AG04450 (cell line): ENCODE measurements at regions of chr6 and their contacts with region 1.

Region 1: GRCh38 chr6:36765594-36766398 is 68.2 kb downstream of the RAB44 start:
- DNase-seq: peak; percentile 43
- H3K4me3 ChIP-seq: no peak overlapping the region
- H3K27ac ChIP-seq: no peak overlapping the region
- H3K27me3 ChIP-seq: no peaks in the 10 kb centered on the region
- CTCF ChIP-seq: peak; percentile 98

Region 2: DNA sequence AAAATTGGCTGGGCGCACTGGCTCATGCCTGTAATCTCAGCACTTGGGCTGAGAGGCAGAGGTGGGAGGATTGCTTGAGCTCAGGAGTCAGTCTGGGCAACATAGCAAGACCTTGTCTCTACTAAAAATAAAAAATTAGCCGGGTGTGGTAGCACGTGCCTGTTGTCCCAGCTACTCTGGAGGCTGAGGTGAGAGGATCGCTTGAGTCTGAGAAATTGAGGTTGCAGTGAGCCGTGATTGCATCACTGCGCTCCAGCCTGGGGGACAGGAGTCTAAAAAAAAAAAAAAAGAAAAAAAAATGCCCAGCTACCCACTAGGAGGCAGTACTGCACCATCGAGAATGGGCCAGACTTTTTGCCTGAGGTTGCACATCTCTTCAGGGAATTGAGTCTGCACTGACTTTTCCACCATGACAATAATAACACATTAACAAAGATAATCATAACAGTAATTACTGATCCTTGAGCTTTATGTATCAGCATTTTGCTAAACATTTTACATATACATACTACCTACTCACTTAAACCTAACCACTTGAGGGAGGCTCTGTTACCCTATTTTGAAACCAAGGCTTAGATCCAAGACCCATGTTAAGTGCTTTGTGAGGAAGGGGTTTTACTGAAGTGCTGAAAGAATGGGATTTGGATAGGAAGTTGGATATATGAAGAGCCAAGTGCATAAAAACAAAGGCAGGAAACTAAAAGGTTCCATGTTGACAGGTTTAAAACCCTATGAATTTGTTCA is 150.6 kb before region 1 on chr6:
- CTCF ChIA-PET with region 1: interaction called, 76 read pairs
- POLR2A ChIA-PET with region 1: no interaction called
- DNase-seq: peak; percentile 39
- H3K4me3 ChIP-seq: no peak overlapping the region
- H3K27ac ChIP-seq: peak overlapping the region; percentile 11
- H3K27me3 ChIP-seq: no peaks in the 10 kb centered on the region
- CTCF ChIP-seq: peak; percentile 84

Region 3: DNA sequence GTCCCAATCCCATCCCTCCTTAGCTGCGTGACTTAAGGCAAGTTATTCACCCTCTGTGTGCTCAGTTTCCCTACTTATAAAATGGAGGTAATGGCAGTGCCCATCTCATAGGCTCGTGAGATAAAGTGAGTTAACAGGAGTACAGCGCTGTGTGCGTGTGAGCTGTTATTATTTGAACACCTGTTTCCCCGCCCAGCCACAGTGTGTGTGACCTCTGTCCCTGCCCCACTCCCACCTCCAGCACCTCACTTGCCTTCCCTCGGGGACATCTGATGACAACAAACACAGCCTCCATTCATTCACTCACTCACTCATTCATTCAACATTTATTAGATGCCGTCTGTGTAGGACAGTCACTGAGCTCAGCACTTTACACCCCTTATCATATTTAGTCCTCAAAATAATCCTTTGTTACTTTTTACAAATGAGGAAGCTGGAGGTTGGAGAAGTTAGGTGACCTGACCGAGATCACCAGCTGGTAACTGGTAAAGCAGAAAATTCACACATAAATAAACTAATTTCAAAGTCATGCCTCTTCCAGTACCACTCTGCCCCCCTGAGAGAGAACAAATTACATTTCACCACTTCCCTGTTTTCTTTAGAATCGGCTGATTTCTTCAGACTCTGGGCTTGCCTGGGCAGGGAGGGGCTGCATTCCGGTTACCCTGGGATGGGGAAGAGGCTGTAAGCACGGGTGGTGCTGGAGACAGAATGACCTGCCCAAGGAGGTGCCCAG is 14.8 kb after region 1 on chr6:
- CTCF ChIA-PET with region 1: interaction called, 12 read pairs
- POLR2A ChIA-PET with region 1: no interaction called
- DNase-seq: no peak
- H3K4me3 ChIP-seq: no peak overlapping the region
- H3K27ac ChIP-seq: no peak overlapping the region
- H3K27me3 ChIP-seq: peaks cover 45% of the 10 kb centered on the region
- CTCF ChIP-seq: no peak

Region 4: GRCh38 chr6:36851149-36851614 is 85.4 kb after region 1 on chr6:
- CTCF ChIA-PET with region 1: interaction called, 57 read pairs
- POLR2A ChIA-PET with region 1: no interaction called
- DNase-seq: peak; percentile 21
- H3K4me3 ChIP-seq: no peak overlapping the region
- H3K27ac ChIP-seq: peak overlapping the region; percentile 31
- H3K27me3 ChIP-seq: no peaks in the 10 kb centered on the region
- CTCF ChIP-seq: peak; percentile 72

Region 5: DNA sequence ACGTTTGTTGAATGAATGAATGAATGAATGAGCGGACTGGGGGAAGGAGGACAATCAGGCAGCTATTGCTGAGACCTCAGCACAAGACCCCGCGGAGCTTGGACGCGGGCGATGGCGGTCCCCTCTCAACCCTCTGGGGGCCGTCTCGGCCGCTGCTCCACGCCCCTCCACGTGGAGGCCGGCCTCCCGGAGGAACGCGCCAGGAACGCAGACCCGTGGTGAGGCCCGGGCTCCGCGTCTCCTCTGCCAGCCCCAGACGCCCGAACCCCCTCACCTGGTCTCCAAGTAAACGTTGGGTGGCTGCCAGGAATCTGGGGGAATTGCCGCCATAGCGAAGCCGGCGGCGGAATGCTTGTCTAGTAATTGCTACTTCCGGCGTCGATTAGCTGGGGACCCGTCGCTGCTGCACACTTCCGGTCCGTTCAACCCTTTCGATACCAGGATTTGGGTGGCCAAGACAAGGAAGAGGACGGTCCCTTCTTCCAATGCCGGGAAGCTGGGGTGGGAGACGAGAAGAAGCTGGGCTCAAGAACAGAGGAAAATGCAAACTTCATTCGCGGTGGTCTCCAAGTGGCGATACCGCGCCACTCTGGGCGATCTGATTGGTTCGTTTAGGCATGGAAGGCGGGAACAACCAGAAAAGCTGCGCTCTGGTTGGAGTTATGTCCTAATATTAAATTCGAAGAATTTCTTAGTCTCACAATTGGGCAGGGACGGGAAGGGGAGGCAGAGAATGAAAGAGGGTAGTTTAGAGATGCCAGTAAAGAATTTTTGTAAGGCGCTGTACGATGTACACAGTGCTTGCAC is 108.8 kb after region 1 on chr6 and contains the start of gene PPIL1:
- CTCF ChIA-PET with region 1: interaction called, 35 read pairs
- POLR2A ChIA-PET with region 1: no interaction called
- DNase-seq: peak; percentile 76
- H3K4me3 ChIP-seq: peak within 1 kb of the TSS; percentile 98
- H3K27ac ChIP-seq: peak within 1 kb of the TSS; percentile 98
- H3K27me3 ChIP-seq: no peaks in the 10 kb centered on the region
- CTCF ChIP-seq: 0 out of 2 replicates have a peak, but pooled peaks have one; percentile 11
- polyA plus RNA-seq, gene PPIL1: 34.4 and 40.7 TPM in 2 replicates

Region 6: GRCh38 chr6:36885461-36886401 is 119.9 kb after region 1 on chr6 and contains the start of gene C6orf89:
- CTCF ChIA-PET with region 1: interaction called, 23 read pairs
- POLR2A ChIA-PET with region 1: no interaction called
- DNase-seq: peak; percentile 95
- H3K4me3 ChIP-seq: peak within 1 kb of the TSS; percentile 85
- H3K27ac ChIP-seq: peak within 1 kb of the TSS; percentile 22
- H3K27me3 ChIP-seq: no peaks in the 10 kb centered on the region
- CTCF ChIP-seq: peak; percentile 85
- polyA plus RNA-seq, gene C6orf89: 59.7 and 60.4 TPM in 2 replicates

Region 7: GRCh38 chr6:37207903-37208456 is 442.2 kb after region 1 on chr6:
- CTCF ChIA-PET with region 1: interaction called, 10 read pairs
- POLR2A ChIA-PET with region 1: no interaction called
- DNase-seq: peak; percentile 47
- H3K4me3 ChIP-seq: no peak overlapping the region
- H3K27ac ChIP-seq: no peak overlapping the region
- H3K27me3 ChIP-seq: no peaks in the 10 kb centered on the region
- CTCF ChIP-seq: peak; percentile 87